GM12878 (cell line): ENCODE measurements at regions of chr18 and their contacts with region 1.

Region 1: DNA sequence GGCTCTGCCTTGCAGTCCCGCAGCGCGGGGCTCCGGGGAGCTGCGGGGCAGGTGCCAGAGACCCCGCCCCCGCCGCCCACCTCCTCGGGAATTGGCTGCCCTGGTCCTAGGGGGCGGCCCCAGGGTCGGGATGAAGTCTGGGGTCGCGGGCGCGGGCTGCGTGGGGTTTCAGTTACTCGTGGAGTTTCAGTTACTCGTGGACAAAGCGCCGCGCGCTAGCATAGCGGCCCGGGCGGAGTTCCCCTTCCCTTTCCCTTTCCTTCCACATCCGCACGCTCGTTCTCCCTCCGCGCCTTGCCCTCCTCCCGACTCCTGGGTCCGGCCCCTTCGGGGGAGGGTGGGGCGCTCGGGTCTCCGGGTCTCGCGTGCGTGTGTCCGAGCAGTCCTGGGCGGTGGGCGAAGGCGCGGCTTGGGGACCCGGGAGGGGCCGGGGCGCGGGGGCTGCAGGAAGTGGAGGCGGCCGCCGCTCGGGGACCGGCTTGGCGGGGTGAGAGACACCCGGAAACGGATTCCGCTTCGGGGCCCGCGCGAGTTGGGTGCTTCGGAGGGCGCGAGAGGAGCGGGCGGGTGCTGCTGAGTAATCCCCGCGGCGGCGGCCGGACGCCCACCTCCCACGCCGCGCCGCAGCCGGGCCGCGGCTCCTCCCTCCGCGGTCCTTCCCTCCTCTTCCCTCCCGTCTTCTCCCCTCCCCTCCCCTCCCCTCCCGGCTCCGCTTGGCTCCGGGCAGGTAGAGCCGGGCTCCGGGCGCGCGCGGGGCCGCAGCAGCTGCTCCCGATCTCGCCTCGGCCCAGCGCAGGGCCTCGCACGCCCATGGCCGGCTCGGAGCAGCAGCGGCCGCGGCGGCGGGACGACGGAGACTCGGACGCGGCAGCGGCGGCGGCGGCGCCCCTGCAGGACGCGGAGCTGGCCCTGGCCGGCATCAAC is at the start of gene TTC39C:
- DNase-seq: no peak
- ATAC-seq: peak; percentile 66
- H3K4me3 ChIP-seq: peak within 1 kb of the TSS; percentile 88
- H3K27ac ChIP-seq: peak within 1 kb of the TSS; percentile 86
- H3K4me1 ChIP-seq: peaks cover 61% of the 10 kb centered on the region
- H3K27me3 ChIP-seq: no peaks in the 10 kb centered on the region
- CTCF ChIP-seq: no peak
- EP300 ChIP-seq: peak in 1 of 2 experiments; percentile 18; a peak in 1 of 4 replicates
- POLR2A ChIP-seq: peak; percentile 81
- RAD21 ChIP-seq: no peak
- polyA plus RNA-seq, gene TTC39C: 21.1 to 37.2 TPM

Region 2: GRCh38 chr18:23812546-23813440 is 201.5 kb before region 1 on chr18:
- CTCF ChIA-PET with region 1: no interaction called
- POLR2A ChIA-PET with region 1: interaction called, 3 read pairs
- RAD21 ChIA-PET with region 1: no interaction called
- SMC1A ChIA-PET with region 1: no interaction called
- in situ Hi-C with region 1: no loop called
- intact Hi-C with region 1: loop called (anchors 5 kb)
- DNase-seq: no peak
- ATAC-seq: no peak
- H3K4me3 ChIP-seq: no peak overlapping the region
- H3K27ac ChIP-seq: no peak overlapping the region
- H3K4me1 ChIP-seq: peaks cover 15% of the 10 kb centered on the region
- H3K27me3 ChIP-seq: no peaks in the 10 kb centered on the region; a peak in 1 of 4 replicates
- CTCF ChIP-seq: peak; percentile 30 to 53 (median 38); a peak in 3 of 6 replicates
- EP300 ChIP-seq: no peak
- POLR2A ChIP-seq: no peak
- RAD21 ChIP-seq: peak; percentile 67

Region 3: DNA sequence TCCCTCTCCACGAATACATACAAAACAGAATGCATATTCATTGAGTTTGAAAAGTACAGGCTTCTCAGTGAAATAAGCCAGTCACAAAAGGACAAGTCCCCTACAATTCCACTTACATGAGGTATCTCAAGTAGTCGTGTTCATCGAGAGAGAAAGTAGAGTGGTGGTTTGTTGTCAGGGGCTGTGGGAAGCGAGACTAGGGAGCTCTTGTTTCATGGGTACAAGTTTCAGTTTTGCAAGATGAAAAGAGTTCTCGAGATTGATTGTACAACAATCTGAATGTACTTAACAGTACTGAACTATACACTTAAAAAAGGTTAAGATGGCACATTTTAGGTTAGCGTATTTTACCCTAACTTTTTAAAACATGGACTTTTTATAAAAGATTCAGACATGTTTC is 71.2 kb before region 1 on chr18:
- CTCF ChIA-PET with region 1: interaction called, 4 read pairs
- POLR2A ChIA-PET with region 1: interaction called, 5 read pairs
- RAD21 ChIA-PET with region 1: interaction called, 17 read pairs
- SMC1A ChIA-PET with region 1: interaction called, 14 read pairs
- in situ Hi-C with region 1: no loop called
- intact Hi-C with region 1: loop called (anchors 2 kb)
- DNase-seq: peak; percentile 68
- ATAC-seq: peak; percentile 84
- H3K4me3 ChIP-seq: no peak overlapping the region
- H3K27ac ChIP-seq: peak overlapping the region; percentile 65
- H3K4me1 ChIP-seq: peaks cover 44% of the 10 kb centered on the region
- H3K27me3 ChIP-seq: no peaks in the 10 kb centered on the region
- CTCF ChIP-seq: no peak
- EP300 ChIP-seq: peak in 1 of 2 experiments; percentile 27; a peak in 2 of 4 replicates
- POLR2A ChIP-seq: no peak
- RAD21 ChIP-seq: no peak

Region 4: GRCh38 chr18:23994361-23994902 is 19.9 kb before region 1 on chr18:
- CTCF ChIA-PET with region 1: no interaction called
- POLR2A ChIA-PET with region 1: interaction called, 3 read pairs
- RAD21 ChIA-PET with region 1: no interaction called
- SMC1A ChIA-PET with region 1: interaction called, 13 read pairs
- in situ Hi-C with region 1: no loop called
- intact Hi-C with region 1: no loop called
- DNase-seq: no peak
- ATAC-seq: peak; percentile 13; the same call in 2 of the 3 replicates
- H3K4me3 ChIP-seq: peak overlapping the region; percentile 68
- H3K27ac ChIP-seq: peak overlapping the region; percentile 62
- H3K4me1 ChIP-seq: peaks cover 30% of the 10 kb centered on the region
- H3K27me3 ChIP-seq: no peaks in the 10 kb centered on the region
- CTCF ChIP-seq: no peak
- EP300 ChIP-seq: no peak
- POLR2A ChIP-seq: peak; percentile 44; the same call in 1 of the 2 replicates
- RAD21 ChIP-seq: 0 out of 2 replicates have a peak, but pooled peaks have one; percentile 6

Region 5: GRCh38 chr18:24118750-24119577 is 104.6 kb after region 1 on chr18:
- CTCF ChIA-PET with region 1: interaction called, 4 read pairs
- POLR2A ChIA-PET with region 1: interaction called, 3 read pairs
- RAD21 ChIA-PET with region 1: interaction called, 4 read pairs
- SMC1A ChIA-PET with region 1: interaction called, 5 read pairs
- in situ Hi-C with region 1: no loop called
- intact Hi-C with region 1: loop called (anchors 2 kb)
- DNase-seq: peak; percentile 56
- ATAC-seq: peak; percentile 93
- H3K4me3 ChIP-seq: no peak overlapping the region
- H3K27ac ChIP-seq: no peak overlapping the region
- H3K4me1 ChIP-seq: no peaks in the 10 kb centered on the region
- H3K27me3 ChIP-seq: no peaks in the 10 kb centered on the region
- CTCF ChIP-seq: peak; percentile 64 to 78 (median 77)
- EP300 ChIP-seq: no peak
- POLR2A ChIP-seq: no peak
- RAD21 ChIP-seq: peak; percentile 86